ENCODE measurements at regions of chr14 and their contacts with region 1.

Region 1: DNA sequence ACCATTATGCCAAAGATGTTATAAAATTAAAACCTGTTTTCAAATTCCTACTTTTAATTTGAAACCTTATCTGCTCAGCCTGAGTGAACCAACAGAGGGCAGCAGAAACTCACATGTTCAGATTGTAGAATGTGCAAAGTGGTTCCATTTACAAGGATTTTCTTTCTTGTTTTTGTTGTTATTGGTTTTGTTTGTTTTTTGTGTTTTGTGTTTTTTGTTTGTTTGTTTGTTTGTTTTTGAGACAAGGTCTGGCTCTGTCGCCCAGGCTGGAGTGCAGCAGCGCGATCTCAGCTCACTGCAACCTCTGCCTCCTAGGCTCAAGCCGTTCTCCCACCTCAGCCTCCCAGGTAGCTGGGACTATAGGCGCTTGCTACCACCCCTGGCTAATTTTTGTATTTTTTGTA is 22.8 kb upstream of the GARIN2 start:
- DNase-seq: peak in 2 of 10 donors; percentile 42 to 53
- H3K4me3 ChIP-seq: no peak overlapping the region
- H3K27ac ChIP-seq: peak overlapping the region in 20 of 59 donors; percentile 2 to 52 (median 39)
- H3K27me3 ChIP-seq: no peaks in the 10 kb centered on the region
- CTCF ChIP-seq: peak; percentile 58 to 97 (median 85)

Region 2: GRCh38 chr14:67359775-67360648 is 193.6 kb after region 1 on chr14 and contains the starts of genes ATP6V1D and EIF2S1:
- intact Hi-C with region 1: loop called (anchors 5 kb)
- DNase-seq: peak; percentile 98 to 100 (median 99)
- H3K4me3 ChIP-seq: peak within 1 kb of the TSS; percentile 67 to 100 (median 94)
- H3K27ac ChIP-seq: peak within 1 kb of the TSS; percentile 91 to 100 (median 99)
- H3K27me3 ChIP-seq: no peaks in the 10 kb centered on the region
- CTCF ChIP-seq: peak; percentile 91 to 100 (median 99)
- total RNA-seq, gene ATP6V1D: 54.1 to 244 (median 150) TPM
- total RNA-seq, gene EIF2S1: 31.2 to 84.1 (median 59.5) TPM

Region 3: GRCh38 chr14:68408680-68409079 is 1242.2 kb after region 1 on chr14:
- intact Hi-C with region 1: no loop called
- DNase-seq: no peak
- H3K4me3 ChIP-seq: no peak overlapping the region
- H3K27ac ChIP-seq: no peak overlapping the region
- H3K27me3 ChIP-seq: no peaks in the 10 kb centered on the region
- CTCF ChIP-seq: peak in 38 of 56 donors; percentile 11 to 63 (median 30)